Left ventricle myocardium inferior (tissue), 1 donor: ENCODE measurements at regions of chr12 and their contacts with region 1.

Region 1: GRCh38 chr12:116591855-116592637 is 32.9 kb downstream of the MAP1LC3B2 start:
- DNase-seq: peak; percentile 25
- H3K4me3 ChIP-seq: no peak overlapping the region
- H3K27ac ChIP-seq: peak overlapping the region; percentile 45
- H3K4me1 ChIP-seq: peaks cover 19% of the 10 kb centered on the region
- H3K27me3 ChIP-seq: peaks cover 9% of the 10 kb centered on the region
- CTCF ChIP-seq: no peak

Region 2: DNA sequence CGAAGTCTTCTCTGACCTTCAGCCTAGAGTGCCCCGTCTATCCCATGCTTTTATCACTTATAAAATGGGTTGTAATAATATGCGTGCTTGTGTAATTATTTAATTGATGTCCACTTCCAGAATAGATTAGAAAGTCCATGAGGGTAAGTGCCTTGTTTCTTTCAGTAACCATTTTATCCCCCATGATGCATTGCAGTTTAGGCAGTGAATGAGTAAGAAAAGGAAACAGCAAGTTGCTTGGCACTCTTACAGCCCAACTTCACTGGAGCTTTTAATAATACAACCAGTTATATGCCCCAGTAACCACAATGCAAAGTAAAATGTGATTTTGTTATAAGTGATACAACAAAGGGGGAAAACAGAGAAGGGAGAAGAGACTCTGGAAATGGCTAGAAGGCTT is 601.8 kb before region 1 on chr12:
- intact Hi-C with region 1: loop called (anchors 5 kb)
- DNase-seq: no peak
- H3K4me3 ChIP-seq: no peak overlapping the region
- H3K27ac ChIP-seq: no peak overlapping the region
- H3K4me1 ChIP-seq: peaks cover 19% of the 10 kb centered on the region
- H3K27me3 ChIP-seq: no peaks in the 10 kb centered on the region
- CTCF ChIP-seq: no peak